ENCODE measurements at regions of chr11 and their contacts with region 1.

Region 1: DNA sequence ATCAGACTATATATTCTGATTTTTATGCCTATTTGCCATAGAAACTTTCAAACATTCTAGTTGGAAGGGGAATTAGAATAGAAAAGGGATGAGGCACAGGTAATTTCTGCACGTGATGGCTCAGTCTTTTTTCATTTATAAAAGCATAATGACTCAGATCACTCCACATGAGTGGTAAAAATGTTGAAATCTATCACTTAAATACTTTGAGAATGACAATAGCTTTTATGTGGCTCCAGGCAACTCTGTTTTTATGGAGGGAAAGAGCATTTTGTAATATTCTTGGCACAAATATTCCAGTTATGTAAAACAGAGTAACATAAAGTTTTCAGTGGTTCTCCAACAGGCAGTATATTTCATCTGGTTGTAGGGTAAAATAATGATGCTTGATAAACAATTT is 5.9 kb upstream of the MMP3 start:
- DNase-seq: no peak
- ATAC-seq: no peak

Region 2: GRCh38 chr11:102933627-102934026 is 84.3 kb after region 1 on chr11:
- intact Hi-C with region 1: loop called in 1 of 2 experiments (anchors 10 kb)
- DNase-seq: no peak
- ATAC-seq: no peak

Measured in left colon (tissue), 2 donors.